Breast epithelium (tissue), 4 donors: ENCODE measurements at regions of chr5 and their contacts with region 1.

Region 1: GRCh38 chr5:139468421-139468931 is 2.3 kb upstream of the SMIM33 start:
- DNase-seq: no peak
- H3K4me3 ChIP-seq: no peak overlapping the region
- H3K27ac ChIP-seq: no peak overlapping the region
- H3K4me1 ChIP-seq: no peaks in the 10 kb centered on the region
- H3K27me3 ChIP-seq: no peaks in the 10 kb centered on the region
- CTCF ChIP-seq: no peak
- POLR2A ChIP-seq: no peak

Region 2: DNA sequence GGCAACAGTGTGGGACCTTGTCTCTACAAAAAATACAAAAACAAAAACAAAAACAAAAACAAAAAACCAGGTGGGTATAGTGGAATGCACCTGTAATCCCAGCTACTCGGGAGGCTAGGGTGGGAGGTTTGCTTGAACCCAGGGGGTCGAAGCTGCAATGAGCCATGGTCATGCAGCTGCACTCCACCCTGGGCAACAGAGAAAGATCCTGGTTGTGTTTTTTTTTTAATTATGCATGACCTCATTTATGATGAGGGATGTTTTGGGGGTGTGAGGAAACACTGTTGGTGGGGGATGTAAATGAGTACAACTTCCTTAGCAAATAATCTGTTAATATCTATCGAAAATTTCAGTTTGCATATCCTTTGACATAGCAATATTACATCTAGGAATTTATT is 63.3 kb after region 1 on chr5:
- intact Hi-C with region 1: loop called (anchors 2 kb)
- DNase-seq: no peak
- H3K4me3 ChIP-seq: no peak overlapping the region
- H3K27ac ChIP-seq: no peak overlapping the region
- H3K4me1 ChIP-seq: no peaks in the 10 kb centered on the region
- H3K27me3 ChIP-seq: no peaks in the 10 kb centered on the region
- CTCF ChIP-seq: no peak
- POLR2A ChIP-seq: no peak